Activated CD4-positive, alpha-beta T cell treated with anti-CD3 and anti-CD28 coated beads, Interleukin-2, amount 10 ng/mL, durations not matched to agents 24 days and 14 days (primary cell): ENCODE measurements at regions of chr12 and their contacts with region 1.

Region 1: DNA sequence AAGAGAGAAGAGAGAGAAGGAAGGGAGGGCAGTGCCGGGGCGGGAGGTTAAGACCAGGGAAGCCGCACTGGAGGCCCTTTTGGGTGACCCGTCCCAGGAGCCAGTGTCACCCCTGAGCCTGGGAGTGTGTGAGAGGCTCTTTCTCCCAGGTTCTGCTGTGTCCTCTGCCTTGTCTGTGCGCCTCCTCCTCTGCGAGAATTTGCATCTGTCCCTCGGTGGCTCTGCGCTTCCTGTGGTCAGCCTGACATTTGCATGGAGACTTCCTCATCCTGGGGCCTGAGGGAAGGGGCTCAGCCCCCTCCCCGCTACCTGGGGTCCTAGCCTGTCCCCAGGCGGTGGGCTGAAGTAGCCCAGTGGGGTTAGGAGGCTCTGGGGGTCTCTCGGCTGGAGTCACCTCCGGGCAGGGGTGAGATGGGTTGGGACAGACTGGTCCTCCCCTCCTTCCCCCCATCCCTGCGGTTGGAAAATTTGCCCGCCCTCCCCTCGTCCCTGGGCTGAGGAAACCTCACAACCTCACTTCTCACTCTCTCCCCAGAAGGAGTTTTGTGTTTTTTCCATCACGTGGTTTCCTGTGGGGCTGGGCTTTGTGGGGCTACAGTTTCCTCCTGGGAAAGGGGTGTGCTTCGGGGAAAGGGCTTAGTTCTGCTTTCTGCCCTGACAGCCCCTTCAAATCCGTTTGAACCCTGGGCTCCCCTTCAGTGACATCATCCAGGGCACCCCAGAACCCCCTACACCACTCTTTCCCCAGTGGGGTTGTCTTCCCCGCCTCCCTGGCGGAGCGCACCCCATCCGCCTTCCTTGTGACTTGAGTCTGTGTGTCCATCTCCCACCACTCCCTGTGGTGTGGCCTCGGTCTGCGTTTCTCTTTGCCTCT is 2.5 kb downstream of the PTPN6 start:
- DNase-seq: peak; percentile 96
- H3K4me3 Mint-ChIP-seq: peak overlapping the region; percentile 96
- H3K27ac Mint-ChIP-seq: peak overlapping the region; percentile 96
- H3K4me1 Mint-ChIP-seq: peaks cover 71% of the 10 kb centered on the region
- H3K27me3 Mint-ChIP-seq: no peaks in the 10 kb centered on the region

Region 2: GRCh38 chr12:6423267-6424007 is 530.2 kb before region 1 on chr12:
- intact Hi-C with region 1: no loop called
- DNase-seq: peak; percentile 93
- H3K4me3 Mint-ChIP-seq: peak overlapping the region; percentile 17
- H3K27ac Mint-ChIP-seq: peak overlapping the region; percentile 84
- H3K4me1 Mint-ChIP-seq: peaks cover 40% of the 10 kb centered on the region
- H3K27me3 Mint-ChIP-seq: no peaks in the 10 kb centered on the region

Region 3: DNA sequence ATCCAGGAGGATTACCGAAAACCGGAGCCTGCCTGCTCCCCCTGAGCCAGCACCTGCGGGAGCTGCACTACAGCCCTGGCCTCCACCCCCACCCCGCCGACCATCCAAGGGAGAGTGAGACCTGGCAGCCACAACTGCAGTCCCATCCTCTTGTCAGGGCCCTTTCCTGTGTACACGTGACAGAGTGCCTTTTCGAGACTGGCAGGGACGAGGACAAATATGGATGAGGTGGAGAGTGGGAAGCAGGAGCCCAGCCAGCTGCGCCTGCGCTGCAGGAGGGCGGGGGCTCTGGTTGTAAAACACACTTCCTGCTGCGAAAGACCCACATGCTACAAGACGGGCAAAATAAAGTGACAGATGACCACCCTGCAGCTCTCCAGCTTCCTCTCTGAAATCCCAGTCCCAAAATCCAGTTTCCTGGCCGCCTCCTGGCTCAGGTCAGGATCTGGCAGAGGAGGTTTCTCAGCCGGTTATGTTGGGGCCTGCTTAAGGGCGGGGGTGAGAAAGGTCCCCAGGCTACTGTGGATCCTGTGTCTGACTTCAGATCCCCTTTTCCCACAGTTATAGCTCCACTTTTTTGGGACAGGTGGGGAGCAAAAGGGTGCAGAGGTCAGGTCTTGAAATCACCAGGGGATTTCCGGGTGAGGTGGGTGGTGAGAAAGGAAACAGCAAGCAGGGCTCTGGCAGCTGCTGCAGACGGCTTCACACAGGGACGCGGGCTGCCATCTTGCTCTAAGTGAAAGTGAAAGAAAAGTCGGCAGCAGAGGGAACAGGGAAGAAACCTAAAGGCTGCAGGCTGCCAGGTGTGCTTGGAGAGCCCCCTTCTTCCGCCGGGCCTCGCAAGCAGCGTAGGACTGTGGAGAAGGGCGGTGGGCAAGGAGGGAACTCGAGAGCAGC is 502.1 kb before region 1 on chr12 and contains the start of gene TAPBPL:
- intact Hi-C with region 1: loop called (anchors 5 kb)
- DNase-seq: peak; percentile 94
- H3K4me3 Mint-ChIP-seq: peak within 1 kb of the TSS; percentile 97
- H3K27ac Mint-ChIP-seq: peak within 1 kb of the TSS; percentile 97
- H3K4me1 Mint-ChIP-seq: peaks cover 66% of the 10 kb centered on the region
- H3K27me3 Mint-ChIP-seq: no peaks in the 10 kb centered on the region
- total RNA-seq, gene TAPBPL: 31.9 and 33.0 TPM in 2 replicates

Region 4: GRCh38 chr12:6507102-6507998 is 446.3 kb before region 1 on chr12:
- intact Hi-C with region 1: no loop called
- DNase-seq: no peak
- H3K4me3 Mint-ChIP-seq: no peak overlapping the region
- H3K27ac Mint-ChIP-seq: peak overlapping the region; percentile 34
- H3K4me1 Mint-ChIP-seq: peaks cover 14% of the 10 kb centered on the region
- H3K27me3 Mint-ChIP-seq: no peaks in the 10 kb centered on the region

Region 5: DNA sequence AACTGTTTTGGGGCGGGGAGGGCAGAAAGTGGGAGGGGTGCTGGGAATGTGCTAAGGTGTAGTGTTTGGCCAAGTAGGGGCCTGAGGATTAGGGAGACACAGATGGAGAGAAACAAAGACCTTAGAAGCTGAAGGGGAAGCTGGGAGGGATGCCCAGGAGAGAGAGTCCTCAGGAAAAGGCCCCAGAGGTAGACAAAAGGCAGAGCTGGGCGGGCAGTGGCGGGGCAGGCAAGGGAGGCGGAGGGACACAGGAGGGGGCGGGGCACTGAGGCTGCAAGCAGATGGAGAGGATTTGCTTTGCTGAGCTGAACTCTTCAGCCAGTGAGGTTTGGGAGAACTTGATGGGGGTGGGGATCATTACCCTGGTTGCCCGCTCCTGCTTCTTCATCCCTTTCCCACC is 184.7 kb before region 1 on chr12:
- intact Hi-C with region 1: no loop called
- DNase-seq: no peak
- H3K4me3 Mint-ChIP-seq: peak overlapping the region; percentile 86
- H3K27ac Mint-ChIP-seq: peak overlapping the region; percentile 5
- H3K4me1 Mint-ChIP-seq: peaks cover 59% of the 10 kb centered on the region
- H3K27me3 Mint-ChIP-seq: peaks cover 6% of the 10 kb centered on the region

Region 6: GRCh38 chr12:6978609-6979011 is 24.9 kb after region 1 on chr12:
- intact Hi-C with region 1: no loop called
- DNase-seq: no peak
- H3K4me3 Mint-ChIP-seq: no peak overlapping the region
- H3K27ac Mint-ChIP-seq: no peak overlapping the region
- H3K4me1 Mint-ChIP-seq: peaks cover 5% of the 10 kb centered on the region
- H3K27me3 Mint-ChIP-seq: no peaks in the 10 kb centered on the region